Activated B cell treated with CpG ODN at 0.5 μM for 24 hours (primary cell): ENCODE measurements at regions of chr11 and their contacts with region 1.

Region 1: DNA sequence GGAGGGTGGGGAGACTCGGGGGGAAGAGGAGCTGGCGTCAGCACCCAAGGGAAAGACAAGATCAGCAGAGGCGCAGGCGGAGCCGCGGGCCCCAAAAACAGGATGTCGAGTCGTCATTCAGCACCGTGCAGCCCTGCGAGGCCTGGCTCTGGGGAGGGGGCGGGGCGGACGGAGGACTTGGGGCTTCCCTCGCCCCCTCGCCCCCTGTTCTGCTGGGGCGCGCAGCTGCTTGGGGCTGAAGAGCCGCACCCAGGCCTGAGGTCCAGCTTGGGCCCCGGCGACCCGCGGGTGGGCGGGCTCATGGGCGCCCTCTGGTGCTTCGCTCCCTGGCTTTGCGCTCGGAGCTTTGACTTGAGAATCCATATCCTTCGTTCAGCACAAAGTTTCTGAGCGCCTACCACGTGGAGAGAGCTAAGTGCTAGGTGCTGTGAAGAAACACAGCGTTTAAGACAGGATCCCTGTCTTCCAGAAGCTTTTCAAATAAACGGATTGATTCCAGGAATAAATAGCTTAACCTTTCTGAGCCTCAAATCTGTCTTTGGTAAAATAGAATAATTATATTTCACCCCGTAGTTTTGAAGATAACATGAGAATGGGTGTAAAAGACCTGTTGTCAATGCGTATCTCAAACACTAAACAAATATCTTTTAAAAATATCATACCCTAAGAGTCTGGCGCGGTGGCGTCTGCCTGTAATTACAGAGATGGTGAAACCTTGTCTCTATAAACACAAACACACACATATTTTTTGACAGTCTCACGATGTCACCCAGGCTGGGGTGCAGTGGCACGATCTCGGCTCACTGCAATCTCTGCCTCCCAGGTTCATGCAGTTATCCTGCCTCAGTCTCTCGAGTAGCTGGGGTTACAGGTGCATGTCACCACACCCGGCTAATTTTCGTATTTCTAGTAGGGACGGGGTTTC is 929 bp upstream of the RHOG start:
- DNase-seq: peak; percentile 96
- ATAC-seq: no peak
- H3K4me3 Mint-ChIP-seq: peak overlapping the region; percentile 91
- H3K27ac Mint-ChIP-seq: peak overlapping the region; percentile 95
- H3K4me1 Mint-ChIP-seq: peaks cover 46% of the 10 kb centered on the region
- H3K27me3 Mint-ChIP-seq: no peaks in the 10 kb centered on the region
- CTCF ChIP-seq: no peak

Region 2: DNA sequence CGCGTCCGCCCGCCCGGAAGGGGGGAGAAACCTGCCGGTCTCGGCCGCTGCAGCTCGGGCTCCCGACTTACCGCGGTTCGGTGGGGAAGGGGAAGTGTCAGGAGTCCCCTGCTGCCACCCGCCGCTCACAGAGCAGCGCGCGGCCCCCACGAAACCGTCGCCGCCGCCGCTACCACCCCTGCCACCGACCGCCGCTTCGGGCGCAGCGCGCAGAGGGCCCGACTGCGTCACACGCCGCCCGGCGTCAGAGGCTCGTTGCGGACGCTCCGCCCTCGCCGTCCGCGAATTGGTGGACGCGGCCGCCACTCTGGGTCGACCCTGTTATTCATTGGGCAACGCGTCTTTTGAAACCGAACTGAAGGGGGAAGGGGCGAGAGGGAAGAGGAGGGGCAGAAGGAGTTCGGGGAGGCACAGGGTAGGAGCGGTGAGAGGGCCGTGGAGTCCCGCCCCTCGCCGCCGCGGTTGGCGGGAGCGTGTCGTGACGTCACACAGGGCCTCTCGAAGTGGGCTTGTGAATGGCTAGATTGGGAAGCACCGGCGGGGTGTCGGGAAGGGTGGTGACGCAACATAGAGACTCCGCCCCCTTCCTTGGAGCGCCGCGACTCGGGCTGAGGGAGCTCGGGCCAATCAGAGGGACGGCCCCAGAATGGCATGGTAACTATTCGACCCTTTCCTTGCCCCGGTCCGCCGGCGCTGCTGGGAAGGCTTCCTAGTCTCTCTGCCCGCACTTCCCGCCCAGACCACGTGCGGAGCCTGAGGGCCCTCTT is 44.2 kb before region 1 on chr11 and contains the start of gene NUP98:
- CTCF ChIA-PET with region 1: interaction called, 6 read pairs
- POLR2A ChIA-PET with region 1: interaction called, 74 read pairs
- intact Hi-C with region 1: loop called (anchors 1 kb)
- DNase-seq: peak; percentile 99
- ATAC-seq: peak; percentile 93
- H3K4me3 Mint-ChIP-seq: peak within 1 kb of the TSS; percentile 98
- H3K27ac Mint-ChIP-seq: peak within 1 kb of the TSS; percentile 99
- H3K4me1 Mint-ChIP-seq: peaks cover 43% of the 10 kb centered on the region
- H3K27me3 Mint-ChIP-seq: no peaks in the 10 kb centered on the region
- CTCF ChIP-seq: no peak
- total RNA-seq, gene NUP98: 98.0 and 117 TPM in 2 replicates

Region 3: GRCh38 chr11:3824714-3825472 is 16.8 kb before region 1 on chr11:
- CTCF ChIA-PET with region 1: interaction called, 51 read pairs
- POLR2A ChIA-PET with region 1: interaction called, 91 read pairs
- intact Hi-C with region 1: loop called (anchors 1 kb)
- DNase-seq: peak; percentile 70
- ATAC-seq: peak; percentile 98
- H3K4me3 Mint-ChIP-seq: no peak overlapping the region
- H3K27ac Mint-ChIP-seq: peak overlapping the region; percentile 42
- H3K4me1 Mint-ChIP-seq: peaks cover 28% of the 10 kb centered on the region
- H3K27me3 Mint-ChIP-seq: no peaks in the 10 kb centered on the region
- CTCF ChIP-seq: peak; percentile 48

Region 4: GRCh38 chr11:3873712-3874349 is 32.1 kb after region 1 on chr11:
- CTCF ChIA-PET with region 1: interaction called, 5 read pairs
- POLR2A ChIA-PET with region 1: interaction called, 29 read pairs
- intact Hi-C with region 1: no loop called
- DNase-seq: no peak
- ATAC-seq: peak; percentile 82
- H3K4me3 Mint-ChIP-seq: peak overlapping the region; percentile 20
- H3K27ac Mint-ChIP-seq: peak overlapping the region; percentile 50
- H3K4me1 Mint-ChIP-seq: peaks cover 85% of the 10 kb centered on the region
- H3K27me3 Mint-ChIP-seq: no peaks in the 10 kb centered on the region
- CTCF ChIP-seq: no peak

Region 5: GRCh38 chr11:3894128-3894731 is 52.5 kb after region 1 on chr11:
- CTCF ChIA-PET with region 1: interaction called, 4 read pairs
- POLR2A ChIA-PET with region 1: interaction called, 20 read pairs
- intact Hi-C with region 1: loop called (anchors 1 kb)
- DNase-seq: peak; percentile 84
- ATAC-seq: peak; percentile 97
- H3K4me3 Mint-ChIP-seq: peak overlapping the region; percentile 74
- H3K27ac Mint-ChIP-seq: peak overlapping the region; percentile 88
- H3K4me1 Mint-ChIP-seq: peaks cover 72% of the 10 kb centered on the region
- H3K27me3 Mint-ChIP-seq: no peaks in the 10 kb centered on the region
- CTCF ChIP-seq: no peak

Region 6: GRCh38 chr11:4060182-4060923 is 218.7 kb after region 1 on chr11:
- CTCF ChIA-PET with region 1: interaction called, 526 read pairs
- POLR2A ChIA-PET with region 1: interaction called, 42 read pairs
- intact Hi-C with region 1: loop called (anchors 1 kb)
- DNase-seq: no peak
- ATAC-seq: no peak
- H3K4me3 Mint-ChIP-seq: no peak overlapping the region
- H3K27ac Mint-ChIP-seq: no peak overlapping the region
- H3K4me1 Mint-ChIP-seq: peaks cover 27% of the 10 kb centered on the region
- H3K27me3 Mint-ChIP-seq: no peaks in the 10 kb centered on the region
- CTCF ChIP-seq: no peak